GM23248 (cell line): ENCODE measurements at regions of chr11 and their contacts with region 1.

Region 1: DNA sequence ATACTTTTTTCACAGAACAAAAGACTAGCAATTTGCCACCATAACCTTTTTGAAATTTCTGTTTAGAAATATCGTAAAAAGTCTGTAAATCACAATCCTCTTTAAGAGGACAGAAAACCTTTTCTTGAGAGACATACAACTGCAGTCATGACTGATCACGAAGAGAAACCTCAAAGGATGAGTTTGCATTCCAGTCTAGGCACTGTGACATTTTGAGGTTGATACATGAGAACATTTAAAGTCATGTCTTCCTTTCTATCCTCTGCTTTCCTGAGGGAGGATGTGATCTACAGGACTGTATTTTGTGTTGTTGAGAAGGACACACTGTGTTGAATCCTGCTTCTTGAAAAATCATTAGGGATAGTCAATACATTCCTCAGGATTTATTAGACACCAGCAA is 476.7 kb upstream of the CCDC179 start:
- DNase-seq: peak; percentile 2
- H3K4me3 ChIP-seq: no peak overlapping the region
- H3K27ac ChIP-seq: no peak overlapping the region
- H3K4me1 ChIP-seq: no peaks in the 10 kb centered on the region
- H3K27me3 ChIP-seq: no peaks in the 10 kb centered on the region

Region 2: DNA sequence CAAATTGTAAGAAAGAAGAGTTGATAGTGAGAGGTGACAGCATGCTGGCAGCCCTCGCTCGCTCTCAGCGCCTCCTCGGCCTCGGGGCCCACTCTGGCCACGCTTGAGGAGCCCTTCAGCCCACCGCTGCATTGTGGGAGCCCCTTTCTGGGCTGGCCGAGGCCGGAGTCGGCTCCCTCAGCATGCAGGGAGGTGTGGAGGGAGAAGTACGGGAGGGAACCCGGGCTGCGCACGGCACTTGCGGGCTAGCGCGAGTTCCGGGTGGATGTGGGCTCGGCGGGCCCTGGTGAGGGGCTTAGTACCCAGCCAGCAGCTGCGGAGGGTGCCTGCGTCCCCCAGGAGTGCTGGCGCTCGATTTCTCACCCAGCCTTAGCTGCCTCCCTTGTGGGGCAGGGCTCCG is 63.0 kb after region 1 on chr11:
- in situ Hi-C with region 1: loop called (anchors 10 kb)
- DNase-seq: no peak
- H3K4me3 ChIP-seq: no peak overlapping the region
- H3K27ac ChIP-seq: no peak overlapping the region
- H3K4me1 ChIP-seq: no peaks in the 10 kb centered on the region
- H3K27me3 ChIP-seq: 0 out of 2 replicates have a peak, but pooled peaks cover 6% of the 10 kb centered on the region